Ovary (tissue), 10 donors: ENCODE measurements at regions of chr9 and their contacts with region 1.

Region 1: GRCh38 chr9:128927731-128928411 is 7.1 kb downstream of the PHYHD1 start:
- DNase-seq: peak; percentile 48 to 70 (median 63)
- H3K4me3 ChIP-seq: no peak overlapping the region
- H3K27ac ChIP-seq: no peak overlapping the region
- H3K4me1 ChIP-seq: peaks cover 2% of the 10 kb centered on the region
- H3K27me3 ChIP-seq: no peaks in the 10 kb centered on the region
- CTCF ChIP-seq: peak; percentile 82 to 93 (median 90)
- EP300 ChIP-seq: no peak
- POLR2A ChIP-seq: no peak

Region 2: GRCh38 chr9:128733256-128733655 is 194.6 kb before region 1 on chr9:
- intact Hi-C with region 1: loop called in 1 of 4 experiments (anchors 10 kb)
- DNase-seq: peak; percentile 52 to 73 (median 54)
- H3K4me3 ChIP-seq: no peak overlapping the region
- H3K27ac ChIP-seq: no peak overlapping the region
- H3K4me1 ChIP-seq: no peaks in the 10 kb centered on the region
- H3K27me3 ChIP-seq: no peaks in the 10 kb centered on the region
- CTCF ChIP-seq: peak in 1 of 3 donors; percentile 20
- EP300 ChIP-seq: no peak
- POLR2A ChIP-seq: no peak

Region 3: GRCh38 chr9:128863647-128864046 is 64.2 kb before region 1 on chr9:
- intact Hi-C with region 1: loop called (anchors 1 to 5 kb)
- DNase-seq: peak; percentile 61 to 83 (median 79)
- H3K4me3 ChIP-seq: no peak overlapping the region
- H3K27ac ChIP-seq: no peak overlapping the region
- H3K4me1 ChIP-seq: no peaks in the 10 kb centered on the region
- H3K27me3 ChIP-seq: no peaks in the 10 kb centered on the region
- CTCF ChIP-seq: peak; percentile 78 to 93 (median 92)
- EP300 ChIP-seq: no peak
- POLR2A ChIP-seq: no peak

Region 4: DNA sequence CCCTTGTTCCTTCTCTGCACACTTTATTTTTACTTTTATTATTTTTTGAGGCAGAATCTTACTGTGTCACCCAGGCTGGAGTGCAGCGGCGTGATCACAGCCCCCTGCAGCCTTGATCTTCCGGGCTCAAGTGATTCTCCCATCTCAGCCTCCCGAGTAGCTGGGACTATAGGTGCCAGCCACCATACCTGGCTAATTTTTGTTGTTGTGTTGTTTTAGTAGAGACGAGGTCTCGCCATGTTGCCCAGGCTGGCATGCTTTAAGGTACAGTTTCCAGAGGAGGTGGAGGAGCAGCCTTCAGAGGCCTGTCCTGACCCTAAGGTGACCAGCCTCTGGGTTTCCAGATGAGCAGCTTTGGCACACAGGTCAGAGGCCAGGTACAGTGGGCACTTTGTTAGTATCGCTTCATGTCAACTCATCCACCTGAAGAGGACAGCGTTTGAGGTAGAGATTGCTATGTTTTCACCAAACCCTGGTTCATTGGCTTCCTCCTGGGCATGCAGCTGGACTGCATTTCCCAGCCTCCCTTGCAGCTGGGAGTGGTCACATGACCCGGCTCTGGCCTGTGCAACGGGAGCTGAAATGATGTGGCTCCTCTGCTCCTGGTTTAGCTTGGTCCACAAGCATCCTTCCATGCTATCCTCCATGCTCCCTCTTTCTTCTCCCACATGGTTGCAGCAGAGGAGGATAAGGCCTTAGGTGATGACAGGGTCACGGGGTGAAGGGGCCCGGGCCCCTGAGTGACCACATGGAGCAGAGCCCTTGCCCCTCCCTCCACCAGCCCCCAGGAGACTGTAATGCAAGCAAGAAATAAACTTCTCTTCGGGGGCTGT is 389.5 kb after region 1 on chr9:
- intact Hi-C with region 1: no loop called
- DNase-seq: peak; percentile 63 to 72 (median 67)
- H3K4me3 ChIP-seq: no peak overlapping the region
- H3K27ac ChIP-seq: peak overlapping the region; percentile 88 to 94
- H3K4me1 ChIP-seq: peaks cover 42% of the 10 kb centered on the region
- H3K27me3 ChIP-seq: no peaks in the 10 kb centered on the region
- CTCF ChIP-seq: no peak
- EP300 ChIP-seq: no peak
- POLR2A ChIP-seq: no peak